Naive thymus-derived CD4-positive, alpha-beta T cell (primary cell): ENCODE measurements at regions of chr3 and their contacts with region 1.

Region 1: DNA sequence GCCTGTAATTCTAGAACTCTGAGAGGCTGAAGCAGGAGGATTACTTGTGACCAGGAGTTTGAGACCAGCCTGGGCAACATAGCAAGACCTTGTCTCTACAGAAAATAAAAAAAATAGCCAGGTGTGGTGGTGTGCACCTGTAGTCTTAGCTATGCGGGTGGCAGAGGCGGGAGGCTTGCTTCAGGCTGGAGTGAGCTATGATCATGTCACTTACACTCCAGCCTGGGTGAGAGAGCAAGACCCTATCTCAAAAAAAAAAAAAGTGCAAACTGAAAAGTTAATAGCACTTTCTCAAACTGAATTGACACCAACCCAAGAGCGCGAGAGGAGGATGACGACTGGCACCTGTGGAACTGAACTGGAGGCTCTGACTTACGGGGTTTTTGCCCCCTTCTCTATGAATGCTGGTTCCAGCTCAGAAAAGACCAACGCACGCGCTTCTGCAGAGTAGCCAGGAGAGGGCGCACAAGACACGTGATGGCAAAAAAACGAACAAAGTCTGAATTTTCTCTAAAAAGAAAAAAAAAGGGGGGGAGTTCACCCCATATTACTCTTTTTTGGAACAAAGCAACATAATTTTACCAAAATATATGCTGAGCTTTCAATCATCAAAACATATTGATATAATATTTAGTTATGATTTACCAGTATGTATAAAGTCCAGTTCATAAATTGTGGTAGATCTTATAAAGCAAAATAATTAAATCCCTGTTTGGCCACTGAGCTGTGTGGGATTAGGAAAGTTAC is 23.7 kb downstream of the CFAP92 start:
- DNase-seq: peak; percentile 43 to 75 (median 64)
- ATAC-seq: peak; percentile 89
- H3K4me3 ChIP-seq: no peak overlapping the region
- H3K4me3 Mint-ChIP-seq: peak overlapping the region in 1 of 10 donors; percentile 11
- H3K27ac ChIP-seq: no peak overlapping the region
- H3K27ac Mint-ChIP-seq: no peak overlapping the region
- H3K4me1 ChIP-seq: no peaks in the 10 kb centered on the region
- H3K4me1 Mint-ChIP-seq: peaks cover 0 to 7% (median 6%) of the 10 kb centered on the region in 7 donors
- H3K27me3 ChIP-seq: no peaks in the 10 kb centered on the region
- H3K27me3 Mint-ChIP-seq: peaks cover 0 to 5% (median 0%) of the 10 kb centered on the region in 5 donors

Region 2: DNA sequence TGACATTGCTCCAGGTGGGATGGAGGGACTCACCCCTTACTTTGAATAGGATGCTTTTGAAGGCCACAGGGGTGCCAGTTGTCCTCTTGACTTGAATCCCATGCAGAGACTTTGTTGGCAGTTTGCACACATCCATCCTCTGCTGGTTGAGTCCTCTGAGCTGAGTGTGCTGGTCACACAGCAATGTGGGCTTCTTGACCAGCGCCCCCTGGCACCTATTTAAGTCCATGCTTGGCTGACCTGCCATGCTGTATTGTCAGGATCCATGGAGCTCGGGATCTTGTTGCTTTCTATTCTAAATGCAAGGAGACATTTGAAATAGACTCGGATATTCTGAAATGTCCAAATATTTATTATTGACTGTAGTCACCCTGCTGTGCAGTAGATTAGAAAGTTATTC is 224.4 kb before region 1 on chr3:
- CTCF ChIA-PET with region 1: no interaction called
- POLR2A ChIA-PET with region 1: no interaction called
- intact Hi-C with region 1: no loop called
- DNase-seq: no peak
- ATAC-seq: peak; percentile 34
- H3K4me3 ChIP-seq: no peak overlapping the region
- H3K4me3 Mint-ChIP-seq: peak overlapping the region in 1 of 10 donors; percentile 18
- H3K27ac ChIP-seq: no peak overlapping the region
- H3K27ac Mint-ChIP-seq: no peak overlapping the region
- H3K4me1 ChIP-seq: peaks cover 0 to 6% of the 10 kb centered on the region in 2 donors
- H3K4me1 Mint-ChIP-seq: peaks cover 20 to 66% (median 52%) of the 10 kb centered on the region in 7 donors
- H3K27me3 ChIP-seq: no peaks in the 10 kb centered on the region
- H3K27me3 Mint-ChIP-seq: no peaks in the 10 kb centered on the region

Region 3: GRCh38 chr3:128993461-128994173 is 23.5 kb after region 1 on chr3 and contains the start of gene CFAP92:
- CTCF ChIA-PET with region 1: interaction called, 28 read pairs
- POLR2A ChIA-PET with region 1: interaction called, 14 read pairs
- intact Hi-C with region 1: no loop called
- DNase-seq: peak; percentile 84 to 90 (median 89)
- ATAC-seq: peak; percentile 99
- H3K4me3 ChIP-seq: peak within 1 kb of the TSS; percentile 57
- H3K4me3 Mint-ChIP-seq: peak within 1 kb of the TSS; percentile 71 to 87 (median 82)
- H3K27ac ChIP-seq: peak within 1 kb of the TSS; percentile 61
- H3K27ac Mint-ChIP-seq: peak within 1 kb of the TSS; percentile 56 to 91 (median 73)
- H3K4me1 ChIP-seq: peaks cover 6 to 28% of the 10 kb centered on the region in 2 donors
- H3K4me1 Mint-ChIP-seq: peaks cover 15 to 45% (median 34%) of the 10 kb centered on the region in 7 donors
- H3K27me3 ChIP-seq: no peaks in the 10 kb centered on the region
- H3K27me3 Mint-ChIP-seq: peaks cover 0 to 3% (median 0%) of the 10 kb centered on the region in 5 donors
- total RNA-seq, gene CFAP92: 0.10 to 1.4 (median 0.46) TPM

Region 4: DNA sequence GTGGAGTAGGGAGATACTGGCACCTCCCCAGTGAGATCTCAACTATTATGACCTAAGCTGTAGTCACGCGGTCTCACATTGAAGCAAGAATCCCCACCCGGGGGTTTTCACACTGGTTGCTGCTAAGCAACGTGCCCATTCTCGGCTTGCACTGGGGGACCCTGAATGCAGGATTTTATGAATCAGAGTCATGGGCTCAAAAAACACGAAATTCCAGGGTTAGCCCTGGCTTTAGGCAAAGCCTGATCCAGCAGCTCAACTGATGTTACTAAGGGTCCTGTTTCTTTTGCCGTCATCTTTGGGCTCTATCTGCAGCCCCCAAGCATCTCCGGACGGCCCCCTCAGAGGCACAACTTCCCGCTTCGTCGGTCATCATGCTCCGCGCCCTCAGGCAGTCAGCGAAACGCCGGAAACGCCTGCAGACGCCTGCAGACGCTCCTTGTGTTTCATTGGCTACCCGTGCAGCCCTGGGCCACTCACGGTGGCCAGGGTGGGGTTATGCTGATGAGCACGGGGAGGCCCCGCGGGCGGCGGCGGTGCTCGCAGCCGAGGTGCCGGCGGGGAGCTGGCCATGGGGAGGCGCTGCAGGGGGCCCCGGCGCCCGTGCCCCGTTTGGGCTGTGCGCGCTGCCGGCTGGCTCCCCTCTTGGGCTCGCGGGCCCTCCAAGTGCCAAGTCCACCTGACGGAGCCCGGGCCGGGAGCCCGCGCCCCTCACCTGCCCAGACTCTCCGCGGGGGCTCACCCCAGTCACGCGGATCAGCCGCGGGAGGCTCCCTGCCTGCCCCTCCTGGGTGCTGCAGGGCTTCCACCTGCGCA is 56.8 kb after region 1 on chr3:
- CTCF ChIA-PET with region 1: interaction called, 19 read pairs
- POLR2A ChIA-PET with region 1: interaction called, 3 read pairs
- intact Hi-C with region 1: loop called in 1 of 2 experiments (anchors 2 kb)
- DNase-seq: peak; percentile 84 to 94 (median 93)
- ATAC-seq: peak; percentile 99
- H3K4me3 ChIP-seq: peak overlapping the region; percentile 67
- H3K4me3 Mint-ChIP-seq: peak overlapping the region; percentile 69 to 88 (median 86)
- H3K27ac ChIP-seq: peak overlapping the region; percentile 74
- H3K27ac Mint-ChIP-seq: peak overlapping the region; percentile 82 to 97 (median 93)
- H3K4me1 ChIP-seq: peaks cover 8 to 11% of the 10 kb centered on the region in 2 donors
- H3K4me1 Mint-ChIP-seq: peaks cover 13 to 31% (median 25%) of the 10 kb centered on the region in 7 donors
- H3K27me3 ChIP-seq: no peaks in the 10 kb centered on the region
- H3K27me3 Mint-ChIP-seq: peaks cover 0 to 3% (median 0%) of the 10 kb centered on the region in 5 donors

Region 5: DNA sequence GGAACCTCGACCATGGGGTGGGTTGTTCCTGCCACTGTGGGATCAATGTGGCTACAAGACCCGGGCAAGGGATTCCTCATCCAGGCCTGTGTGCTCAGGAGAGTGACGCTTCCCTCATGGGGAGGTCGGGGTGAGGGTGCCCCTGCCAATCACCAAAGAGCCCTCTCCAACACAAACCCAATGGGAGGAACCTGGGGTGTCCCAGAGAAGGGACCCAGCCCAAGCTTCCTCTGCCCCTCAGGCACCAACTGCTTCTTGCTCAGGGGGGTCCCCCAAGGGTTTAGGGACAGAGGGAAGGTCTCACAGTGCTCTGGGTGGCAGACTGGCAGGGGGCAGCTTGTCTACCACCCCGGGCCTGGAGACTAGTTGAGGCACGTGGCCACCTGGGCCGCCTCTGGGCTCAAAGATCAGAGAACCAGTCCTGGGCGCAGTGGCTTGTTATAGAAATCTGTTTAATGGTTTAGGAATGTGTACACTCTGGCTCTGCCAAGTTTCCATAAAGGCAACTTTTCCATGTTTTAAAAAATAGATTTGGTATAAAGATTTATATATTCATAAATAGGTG is 117.1 kb after region 1 on chr3:
- CTCF ChIA-PET with region 1: interaction called, 10 read pairs
- POLR2A ChIA-PET with region 1: interaction called, 4 read pairs
- intact Hi-C with region 1: loop called in 1 of 2 experiments (anchors 10 kb)
- DNase-seq: no peak
- ATAC-seq: no peak
- H3K4me3 ChIP-seq: no peak overlapping the region
- H3K4me3 Mint-ChIP-seq: no peak overlapping the region
- H3K27ac ChIP-seq: peak overlapping the region; percentile 39
- H3K27ac Mint-ChIP-seq: peak overlapping the region in 4 of 9 donors; percentile 38 to 88 (median 62)
- H3K4me1 ChIP-seq: no peaks in the 10 kb centered on the region
- H3K4me1 Mint-ChIP-seq: peaks cover 0 to 21% (median 14%) of the 10 kb centered on the region in 7 donors
- H3K27me3 ChIP-seq: no peaks in the 10 kb centered on the region
- H3K27me3 Mint-ChIP-seq: no peaks in the 10 kb centered on the region

Region 6: DNA sequence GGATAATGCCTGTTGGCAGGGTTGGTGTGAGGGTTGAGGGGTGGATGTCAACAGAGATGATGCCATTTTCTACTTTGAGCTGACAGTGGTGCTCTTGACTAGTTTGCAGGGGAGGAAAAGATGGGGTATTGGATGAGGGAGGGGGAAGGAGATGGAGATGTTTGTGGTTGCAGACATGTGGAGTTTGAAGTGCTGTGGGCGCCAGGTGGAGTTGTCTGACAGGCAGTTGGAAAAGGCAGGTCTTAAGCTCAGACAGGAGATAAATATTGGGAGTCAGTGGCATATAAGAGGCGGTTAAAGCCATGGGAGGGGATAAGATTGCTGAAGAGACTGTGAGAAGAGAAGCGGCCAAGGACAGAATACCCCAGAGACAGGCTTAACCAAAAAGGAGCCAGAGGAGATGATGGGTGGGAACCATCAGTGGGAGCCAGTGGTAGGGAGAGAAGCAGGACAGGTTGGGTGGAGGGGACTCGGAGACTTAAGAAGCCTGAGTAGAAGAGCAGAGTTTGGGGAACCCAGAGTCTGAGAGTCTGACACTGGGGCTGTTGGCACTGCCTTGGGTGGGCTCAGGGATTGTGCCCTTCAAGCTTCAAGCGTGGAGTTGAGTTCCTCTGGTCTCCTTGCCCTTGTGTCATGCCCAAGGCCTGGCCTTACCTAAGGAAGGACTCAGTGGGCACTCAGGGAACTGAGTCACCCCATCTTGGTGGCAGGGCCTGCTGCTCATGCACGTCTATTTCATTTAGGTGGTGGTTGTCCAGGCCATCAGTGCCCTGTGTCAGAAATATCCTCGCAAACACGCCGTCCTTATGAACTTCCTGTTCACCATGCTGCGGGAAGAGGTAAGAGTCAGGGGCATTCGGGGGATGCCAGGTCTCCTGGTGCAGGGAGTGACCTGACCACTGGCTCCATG is 293.2 kb after region 1 on chr3:
- CTCF ChIA-PET with region 1: interaction called, 10 read pairs
- POLR2A ChIA-PET with region 1: interaction called, 3 read pairs
- intact Hi-C with region 1: no loop called
- DNase-seq: no peak
- ATAC-seq: no peak
- H3K4me3 ChIP-seq: no peak overlapping the region
- H3K4me3 Mint-ChIP-seq: no peak overlapping the region
- H3K27ac ChIP-seq: no peak overlapping the region
- H3K27ac Mint-ChIP-seq: peak overlapping the region in 4 of 9 donors; percentile 6 to 76 (median 51)
- H3K4me1 ChIP-seq: no peaks in the 10 kb centered on the region
- H3K4me1 Mint-ChIP-seq: peaks cover 4 to 16% (median 8%) of the 10 kb centered on the region in 7 donors
- H3K27me3 ChIP-seq: no peaks in the 10 kb centered on the region
- H3K27me3 Mint-ChIP-seq: no peaks in the 10 kb centered on the region

Region 7: GRCh38 chr3:130425484-130425883 is 1455.3 kb after region 1 on chr3:
- CTCF ChIA-PET with region 1: no interaction called
- POLR2A ChIA-PET with region 1: no interaction called
- intact Hi-C with region 1: no loop called
- DNase-seq: no peak
- ATAC-seq: no peak
- H3K4me3 ChIP-seq: no peak overlapping the region
- H3K4me3 Mint-ChIP-seq: no peak overlapping the region
- H3K27ac ChIP-seq: no peak overlapping the region
- H3K27ac Mint-ChIP-seq: no peak overlapping the region
- H3K4me1 ChIP-seq: no peaks in the 10 kb centered on the region
- H3K4me1 Mint-ChIP-seq: no peaks in the 10 kb centered on the region
- H3K27me3 ChIP-seq: no peaks in the 10 kb centered on the region
- H3K27me3 Mint-ChIP-seq: peaks cover 0 to 13% (median 6%) of the 10 kb centered on the region in 5 donors